Esophagus muscularis mucosa (tissue), 4 donors: ENCODE measurements at regions of chrX and their contacts with region 1.

Region 1: DNA sequence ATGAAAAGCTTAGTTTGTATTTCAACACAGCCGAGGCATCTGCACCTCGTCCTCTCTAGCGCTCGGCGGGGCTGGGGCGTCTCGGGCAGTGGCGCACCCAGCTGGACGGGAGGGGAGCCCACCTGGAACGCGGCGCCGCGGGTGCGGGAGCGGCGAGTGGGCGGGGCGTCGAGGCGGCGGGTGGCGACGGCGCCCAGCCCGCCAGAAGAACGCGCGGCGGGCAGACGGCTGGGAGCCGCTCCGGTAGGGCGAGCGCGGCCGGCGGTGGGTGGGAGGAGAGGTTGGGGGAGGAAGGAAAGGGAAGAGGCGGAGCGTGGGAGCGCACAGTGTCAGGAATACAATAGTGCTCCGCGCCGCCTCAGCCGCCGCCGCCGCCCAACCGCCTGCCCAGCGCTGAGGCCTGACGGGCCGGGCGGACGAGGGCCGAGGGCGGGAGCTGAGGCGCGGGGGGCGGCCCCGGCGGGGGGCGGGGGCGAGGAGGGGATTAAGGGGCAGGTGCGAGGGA is at the start of gene JADE3:
- DNase-seq: peak; percentile 91
- H3K4me3 ChIP-seq: peak within 1 kb of the TSS; percentile 71 to 76 (median 71)
- H3K27ac ChIP-seq: peak within 1 kb of the TSS; percentile 73 to 84 (median 76)
- H3K4me1 ChIP-seq: peaks cover 7 to 11% (median 9%) of the 10 kb centered on the region in 4 donors
- H3K27me3 ChIP-seq: no peaks in the 10 kb centered on the region
- CTCF ChIP-seq: no peak
- EP300 ChIP-seq: no peak
- POLR2A ChIP-seq: no peak
- total RNA-seq, gene JADE3: 7.8 to 9.6 (median 8.5) TPM

Region 2: DNA sequence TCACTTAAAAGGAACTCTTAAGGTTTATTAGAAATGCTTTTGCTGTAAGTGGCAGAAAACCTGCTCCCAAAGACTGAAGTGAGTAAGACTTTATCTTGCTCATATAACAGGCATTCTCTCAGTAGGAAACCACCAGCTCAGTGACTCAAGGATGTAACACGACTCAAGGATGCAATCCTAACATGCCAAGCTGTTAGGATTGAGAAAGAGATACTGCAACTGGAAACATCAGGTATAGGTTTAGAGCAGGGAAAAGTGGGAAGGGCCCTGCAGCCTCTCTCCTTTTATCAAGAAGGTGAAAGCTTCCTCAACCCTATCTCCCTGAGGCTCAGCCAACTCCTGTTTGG is 141.4 kb before region 1 on chrX:
- intact Hi-C with region 1: no loop called
- DNase-seq: no peak
- H3K4me3 ChIP-seq: no peak overlapping the region
- H3K27ac ChIP-seq: no peak overlapping the region
- H3K4me1 ChIP-seq: no peaks in the 10 kb centered on the region
- H3K27me3 ChIP-seq: no peaks in the 10 kb centered on the region
- CTCF ChIP-seq: no peak
- EP300 ChIP-seq: no peak
- POLR2A ChIP-seq: no peak

Region 3: GRCh38 chrX:46978341-46979291 is 66.5 kb after region 1 on chrX:
- intact Hi-C with region 1: loop called (anchors 5 kb)
- DNase-seq: no peak
- H3K4me3 ChIP-seq: no peak overlapping the region
- H3K27ac ChIP-seq: peak overlapping the region in 2 of 4 donors; percentile 33 to 51
- H3K4me1 ChIP-seq: peaks cover 0 to 9% (median 5%) of the 10 kb centered on the region in 4 donors
- H3K27me3 ChIP-seq: no peaks in the 10 kb centered on the region
- CTCF ChIP-seq: peak; percentile 50 to 55 (median 54)
- EP300 ChIP-seq: no peak
- POLR2A ChIP-seq: no peak